GM13976 (cell line): ENCODE measurements at regions of chr18 and their contacts with region 1.

Region 1: DNA sequence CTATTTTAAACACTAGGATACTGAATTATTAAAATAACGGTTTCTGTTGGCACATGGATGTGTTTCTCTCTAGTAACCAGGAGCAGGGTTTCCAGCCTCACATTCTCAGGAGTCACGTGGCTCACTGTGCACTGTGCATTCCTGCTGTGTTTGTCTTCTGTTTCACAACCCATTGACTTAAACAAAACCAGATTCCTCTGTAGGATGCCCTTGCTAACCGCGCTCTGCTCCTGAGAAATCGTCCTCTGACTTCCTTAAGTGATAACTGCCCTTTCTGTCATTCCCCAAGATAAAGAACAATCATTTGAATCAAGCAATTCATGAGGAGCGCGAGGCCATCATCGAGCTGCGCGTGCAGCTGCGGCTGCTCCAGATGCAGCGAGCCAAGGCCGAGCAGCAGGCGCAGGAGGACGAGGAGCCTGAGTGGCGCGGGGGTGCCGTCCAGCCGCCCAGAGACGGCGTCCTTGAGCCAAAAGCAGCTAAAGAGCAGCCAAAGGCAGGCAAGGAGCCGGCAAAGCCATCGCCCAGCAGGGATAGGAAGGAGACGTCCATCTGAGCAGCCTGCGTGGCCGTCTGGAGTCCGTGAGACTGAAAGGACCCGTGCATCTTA is 60.2 kb downstream of the RALBP1 start:
- DNase-seq: no peak
- CTCF ChIP-seq: no peak

Region 2: DNA sequence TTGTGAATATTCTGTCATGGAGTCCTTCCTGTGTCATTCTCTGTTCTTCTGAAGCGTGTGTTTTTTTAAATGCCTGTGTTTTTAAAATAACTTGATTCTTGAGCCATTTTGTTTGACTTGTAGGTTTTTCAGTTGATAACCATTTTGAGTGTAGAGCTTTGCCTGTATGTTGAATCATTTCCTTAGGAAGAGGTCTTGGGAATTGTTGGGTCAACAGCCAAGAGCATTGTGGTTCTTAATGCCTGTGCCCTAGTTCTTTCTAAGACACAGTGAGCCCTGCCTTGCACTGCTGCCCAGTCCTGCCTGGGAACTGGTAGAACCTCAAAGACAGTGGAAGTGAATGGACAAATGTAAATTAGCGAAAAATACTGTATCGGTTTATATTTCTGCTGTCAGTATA is 900.4 kb before region 1 on chr18:
- in situ Hi-C with region 1: loop called (anchors 25 kb)
- DNase-seq: no peak
- CTCF ChIP-seq: no peak